Ascending aorta (tissue), 2 donors: ENCODE measurements at regions of chr20 and their contacts with region 1.

Region 1: GRCh38 chr20:21719592-21720214 is 14.2 kb downstream of the PAX1 start:
- DNase-seq: no peak
- H3K4me3 ChIP-seq: no peak overlapping the region
- H3K27ac ChIP-seq: no peak overlapping the region
- H3K4me1 ChIP-seq: no peaks in the 10 kb centered on the region
- H3K27me3 ChIP-seq: no peaks in the 10 kb centered on the region
- CTCF ChIP-seq: peak; percentile 23 to 66 (median 60)

Region 2: DNA sequence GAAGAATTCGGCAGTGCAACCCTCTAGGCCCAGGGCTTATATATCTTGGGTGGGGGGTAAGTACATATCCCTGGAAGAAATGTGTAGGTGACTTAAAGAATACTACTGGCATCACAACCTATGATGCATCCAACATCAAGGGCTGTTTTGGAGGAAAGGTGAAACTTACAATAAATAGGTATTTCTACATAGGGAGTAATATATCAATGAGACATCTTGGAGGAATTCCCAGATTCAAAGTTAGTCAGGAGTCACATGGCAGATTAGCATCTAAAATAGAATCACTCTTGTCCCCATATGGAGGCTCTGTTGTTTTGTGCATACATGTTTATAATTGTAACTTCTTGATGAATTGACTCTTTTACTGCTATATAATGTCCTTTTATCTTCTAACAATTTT is 361.3 kb after region 1 on chr20:
- intact Hi-C with region 1: no loop called
- DNase-seq: no peak
- H3K4me3 ChIP-seq: no peak overlapping the region
- H3K27ac ChIP-seq: no peak overlapping the region
- H3K4me1 ChIP-seq: no peaks in the 10 kb centered on the region
- H3K27me3 ChIP-seq: no peaks in the 10 kb centered on the region
- CTCF ChIP-seq: no peak

Region 3: GRCh38 chr20:22106308-22106938 is 386.7 kb after region 1 on chr20:
- intact Hi-C with region 1: loop called (anchors 10 kb)
- DNase-seq: no peak
- H3K4me3 ChIP-seq: no peak overlapping the region
- H3K27ac ChIP-seq: no peak overlapping the region
- H3K4me1 ChIP-seq: no peaks in the 10 kb centered on the region
- H3K27me3 ChIP-seq: no peaks in the 10 kb centered on the region
- CTCF ChIP-seq: peak; percentile 18 to 47 (median 19)

Region 4: DNA sequence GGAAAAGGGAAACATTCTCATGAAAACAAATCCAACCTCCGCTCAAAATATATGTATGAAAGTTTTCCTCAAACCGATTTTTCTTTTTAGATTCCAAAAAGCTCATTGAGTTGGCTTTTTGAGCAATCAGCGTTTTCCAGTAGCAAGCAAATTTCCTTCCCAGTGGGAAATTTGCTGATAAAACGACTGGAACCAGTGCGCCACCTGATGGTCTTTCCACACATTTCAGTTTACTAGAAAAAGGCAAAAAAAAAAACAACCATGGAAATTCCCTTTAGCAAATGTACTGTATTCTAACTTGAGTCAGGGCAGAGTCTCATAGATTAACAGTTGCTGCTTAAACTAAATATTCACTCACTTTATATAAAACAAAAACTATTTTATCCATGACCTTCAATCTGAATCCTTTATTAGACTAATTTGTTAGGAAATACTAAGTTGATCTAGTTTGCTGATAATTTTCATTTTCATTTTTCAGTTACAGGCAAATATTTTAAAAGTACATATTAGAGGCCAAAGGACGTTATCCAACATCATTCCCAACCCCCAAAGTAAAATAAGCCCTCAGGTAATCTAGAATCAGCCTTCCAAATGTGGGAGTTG is 593.1 kb after region 1 on chr20:
- intact Hi-C with region 1: loop called (anchors 10 kb)
- DNase-seq: no peak
- H3K4me3 ChIP-seq: no peak overlapping the region
- H3K27ac ChIP-seq: no peak overlapping the region
- H3K4me1 ChIP-seq: no peaks in the 10 kb centered on the region
- H3K27me3 ChIP-seq: no peaks in the 10 kb centered on the region
- CTCF ChIP-seq: peak in 2 of 3 experiments; percentile 37 to 58